ENCODE measurements at regions of chr3 and their contacts with region 1.

Region 1: GRCh38 chr3:154135511-154136188 is 14.5 kb downstream of the ARHGEF26 start:
- DNase-seq: no peak
- H3K4me3 ChIP-seq: no peak overlapping the region
- H3K27ac ChIP-seq: no peak overlapping the region
- H3K4me1 ChIP-seq: no peaks in the 10 kb centered on the region
- H3K27me3 ChIP-seq: no peaks in the 10 kb centered on the region
- CTCF ChIP-seq: no peak
- POLR2A ChIP-seq: no peak

Region 2: DNA sequence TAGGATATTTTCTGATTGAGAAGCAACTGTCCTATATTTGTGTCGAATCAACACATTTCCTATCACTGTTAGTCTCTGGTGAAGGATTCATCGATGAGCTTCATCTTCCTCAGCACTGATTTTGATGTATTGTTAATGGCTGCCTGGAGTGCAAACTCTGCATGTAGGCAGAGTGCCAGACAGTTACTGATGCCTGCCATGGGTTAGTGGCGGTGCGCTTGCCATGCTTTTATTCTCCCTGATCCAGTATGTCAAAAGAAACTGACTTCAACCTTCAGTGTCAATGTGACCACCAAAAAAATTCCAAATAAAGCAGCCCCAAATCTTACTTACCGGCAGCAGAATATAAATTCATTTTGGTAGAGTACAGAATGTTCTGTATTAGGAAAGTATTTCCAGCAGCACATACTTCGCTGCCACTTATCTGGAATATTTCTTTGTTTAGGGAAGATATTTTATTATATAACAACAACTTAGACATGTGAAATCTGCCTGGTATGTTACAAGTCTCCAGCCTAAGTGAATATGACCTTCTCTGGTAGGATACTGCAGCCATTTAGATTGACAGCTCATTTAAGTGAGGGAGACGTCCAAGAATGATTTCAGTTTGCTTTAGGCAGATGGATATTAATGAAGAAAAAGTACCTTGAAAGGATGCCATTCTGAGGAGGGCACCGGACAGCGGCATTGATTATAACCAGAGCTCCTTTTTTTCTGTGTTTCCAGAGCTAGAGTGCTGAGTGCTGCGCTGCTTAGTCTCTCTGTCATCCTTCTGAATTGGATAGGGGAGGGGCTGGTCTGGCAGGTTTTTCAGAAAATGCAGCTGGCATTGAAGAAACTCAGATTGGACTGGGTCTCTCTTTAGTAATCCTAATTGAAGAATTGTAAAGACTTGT is 45.4 kb after region 1 on chr3:
- CTCF ChIA-PET with region 1: no interaction called
- POLR2A ChIA-PET with region 1: no interaction called
- dilution Hi-C with region 1: no loop called
- intact Hi-C with region 1: no loop called
- DNase-seq: no peak
- H3K4me3 ChIP-seq: no peak overlapping the region
- H3K27ac ChIP-seq: no peak overlapping the region
- H3K4me1 ChIP-seq: no peaks in the 10 kb centered on the region
- H3K27me3 ChIP-seq: no peaks in the 10 kb centered on the region
- CTCF ChIP-seq: no peak
- POLR2A ChIP-seq: no peak

Region 3: DNA sequence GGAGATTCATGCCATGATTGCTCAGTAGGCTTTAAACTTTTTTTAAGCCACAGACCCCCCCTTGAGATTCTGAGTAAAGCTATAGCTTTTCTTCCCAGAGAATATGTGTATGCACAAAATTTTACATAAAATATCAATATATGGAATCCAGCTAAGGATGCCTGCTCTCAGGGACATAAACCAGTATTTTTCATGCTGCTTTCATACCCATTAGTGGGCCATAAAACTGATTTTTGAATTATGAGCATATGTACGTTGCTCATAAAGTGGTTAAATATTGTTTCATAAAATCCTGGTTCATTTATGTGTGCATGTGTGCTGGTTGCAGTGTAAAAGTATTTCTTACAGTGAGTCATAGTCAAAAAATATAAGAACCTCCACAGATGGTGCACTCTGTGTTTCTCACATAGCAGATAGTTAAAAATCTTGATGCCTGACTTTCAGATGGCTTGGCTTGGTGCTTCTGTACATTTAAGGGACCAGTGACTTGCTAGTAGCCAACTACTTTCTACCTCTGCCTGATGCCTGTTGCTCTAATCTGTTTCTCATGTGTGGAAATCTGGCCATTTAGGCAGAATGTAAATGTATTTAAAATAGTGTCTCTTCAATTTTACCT is 57.5 kb after region 1 on chr3:
- CTCF ChIA-PET with region 1: no interaction called
- POLR2A ChIA-PET with region 1: no interaction called
- dilution Hi-C with region 1: no loop called
- intact Hi-C with region 1: no loop called
- DNase-seq: no peak
- H3K4me3 ChIP-seq: no peak overlapping the region
- H3K27ac ChIP-seq: no peak overlapping the region
- H3K4me1 ChIP-seq: no peaks in the 10 kb centered on the region
- H3K27me3 ChIP-seq: no peaks in the 10 kb centered on the region
- CTCF ChIP-seq: no peak
- POLR2A ChIP-seq: no peak

Region 4: DNA sequence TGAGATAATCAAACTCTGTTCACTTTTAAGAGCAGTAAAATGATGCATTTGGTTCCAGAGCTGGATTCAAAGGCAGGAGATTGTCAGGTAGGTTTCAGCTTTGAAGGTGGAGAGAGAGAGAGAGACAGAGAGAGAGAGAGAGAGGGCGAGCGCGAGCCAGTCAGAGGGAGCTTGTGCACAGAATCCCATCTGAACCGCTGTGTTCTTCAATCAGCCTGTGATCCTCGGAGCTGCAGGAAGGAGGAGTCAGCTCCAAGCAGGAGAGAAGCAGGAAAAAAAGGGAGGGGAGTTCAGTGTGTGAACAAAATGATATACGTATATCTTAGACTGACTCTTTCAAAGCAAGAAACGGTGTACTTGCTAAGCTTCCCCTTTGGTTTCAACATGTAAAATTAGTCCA is 294.4 kb after region 1 on chr3 and contains the start of gene GPR149:
- CTCF ChIA-PET with region 1: no interaction called
- POLR2A ChIA-PET with region 1: no interaction called
- dilution Hi-C with region 1: no loop called
- intact Hi-C with region 1: loop called (anchors 5 kb)
- DNase-seq: peak; percentile 1
- H3K4me3 ChIP-seq: no peak within 1 kb of the TSS
- H3K27ac ChIP-seq: no peak within 1 kb of the TSS
- H3K4me1 ChIP-seq: no peaks in the 10 kb centered on the region
- H3K27me3 ChIP-seq: peaks cover 11 to 15% of the 10 kb centered on the region in 2 experiments
- CTCF ChIP-seq: no peak
- POLR2A ChIP-seq: no peak
- total RNA-seq, gene GPR149: not detected in 2 replicates

Measured in endothelial cell of umbilical vein (primary cell).